ENCODE measurements at regions of chr12 and their contacts with region 1.

Region 1: GRCh38 chr12:122471324-122472226 is 29.2 kb downstream of the ZCCHC8 start:
- DNase-seq: no peak
- ATAC-seq: peak; percentile 56
- H3K4me3 Mint-ChIP-seq: no peak overlapping the region
- H3K27ac Mint-ChIP-seq: no peak overlapping the region
- H3K4me1 Mint-ChIP-seq: peaks cover 23% of the 10 kb centered on the region
- H3K27me3 Mint-ChIP-seq: no peaks in the 10 kb centered on the region

Region 2: GRCh38 chr12:122406701-122407164 is 64.8 kb before region 1 on chr12:
- CTCF ChIA-PET with region 1: interaction called, 253 read pairs
- POLR2A ChIA-PET with region 1: no interaction called
- DNase-seq: no peak
- ATAC-seq: no peak
- H3K4me3 Mint-ChIP-seq: no peak overlapping the region
- H3K27ac Mint-ChIP-seq: no peak overlapping the region
- H3K4me1 Mint-ChIP-seq: peaks cover 16% of the 10 kb centered on the region
- H3K27me3 Mint-ChIP-seq: no peaks in the 10 kb centered on the region

Region 3: GRCh38 chr12:122421821-122422729 is 49.5 kb before region 1 on chr12 and contains the start of gene CLIP1:
- CTCF ChIA-PET with region 1: interaction called, 31 read pairs
- POLR2A ChIA-PET with region 1: interaction called, 4 read pairs
- DNase-seq: peak; percentile 64
- ATAC-seq: peak; percentile 88
- H3K4me3 Mint-ChIP-seq: peak within 1 kb of the TSS; percentile 88
- H3K27ac Mint-ChIP-seq: peak within 1 kb of the TSS; percentile 89
- H3K4me1 Mint-ChIP-seq: peaks cover 30% of the 10 kb centered on the region
- H3K27me3 Mint-ChIP-seq: peaks cover 3% of the 10 kb centered on the region
- total RNA-seq, gene CLIP1: 61.4 to 63.2 TPM

Region 4: DNA sequence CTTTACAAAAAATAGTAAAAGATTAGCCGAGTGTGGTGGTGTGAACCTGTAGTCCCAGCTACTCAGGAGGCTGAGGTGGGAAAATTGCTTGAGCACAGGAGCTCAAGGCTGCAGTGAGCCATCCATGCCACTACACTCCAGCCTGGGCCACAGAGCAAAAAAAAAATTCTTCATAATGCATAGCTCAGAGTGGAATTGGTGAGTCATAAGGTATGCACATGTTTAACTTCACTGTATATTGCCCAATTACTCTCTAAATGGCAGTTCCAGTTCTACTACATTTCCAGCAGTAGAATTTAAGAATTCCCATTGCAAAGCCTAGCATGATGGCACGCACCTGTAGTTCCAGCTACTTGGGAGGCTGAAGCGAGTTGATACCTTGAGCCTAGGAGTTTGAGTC is 22.2 kb before region 1 on chr12:
- CTCF ChIA-PET with region 1: interaction called, 10 read pairs
- POLR2A ChIA-PET with region 1: interaction called, 3 read pairs
- DNase-seq: no peak
- ATAC-seq: no peak
- H3K4me3 Mint-ChIP-seq: no peak overlapping the region
- H3K27ac Mint-ChIP-seq: no peak overlapping the region
- H3K4me1 Mint-ChIP-seq: peaks cover 25% of the 10 kb centered on the region
- H3K27me3 Mint-ChIP-seq: peaks cover 2% of the 10 kb centered on the region

Region 5: DNA sequence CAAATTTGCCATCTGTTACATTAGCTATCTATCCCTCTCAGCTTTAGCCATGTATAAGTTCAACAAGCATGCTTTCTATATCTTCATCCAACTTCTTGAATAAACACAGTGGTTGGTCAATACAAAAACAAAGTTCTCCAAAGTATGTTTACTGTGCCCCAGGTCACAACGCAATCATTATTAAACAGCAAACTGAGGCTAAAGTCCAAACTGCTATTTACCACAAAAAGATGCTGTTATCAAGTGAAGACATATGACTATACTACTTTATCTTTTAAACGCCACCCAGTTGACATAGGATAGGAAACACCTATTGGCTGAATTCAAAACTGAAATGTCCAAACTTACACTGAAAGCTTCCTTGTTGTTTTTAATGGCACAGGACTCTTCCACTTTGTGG is 17.5 kb after region 1 on chr12:
- CTCF ChIA-PET with region 1: interaction called, 11 read pairs
- POLR2A ChIA-PET with region 1: interaction called, 3 read pairs
- DNase-seq: no peak
- ATAC-seq: no peak
- H3K4me3 Mint-ChIP-seq: no peak overlapping the region
- H3K27ac Mint-ChIP-seq: no peak overlapping the region
- H3K4me1 Mint-ChIP-seq: peaks cover 3% of the 10 kb centered on the region
- H3K27me3 Mint-ChIP-seq: no peaks in the 10 kb centered on the region

Region 6: GRCh38 chr12:122500685-122501488 is 29.3 kb after region 1 on chr12 and contains the start of gene ZCCHC8:
- CTCF ChIA-PET with region 1: interaction called, 15 read pairs
- POLR2A ChIA-PET with region 1: interaction called, 4 read pairs
- DNase-seq: peak; percentile 99
- ATAC-seq: peak; percentile 95
- H3K4me3 Mint-ChIP-seq: peak within 1 kb of the TSS; percentile 99
- H3K27ac Mint-ChIP-seq: peak within 1 kb of the TSS; percentile 99
- H3K4me1 Mint-ChIP-seq: peaks cover 34% of the 10 kb centered on the region
- H3K27me3 Mint-ChIP-seq: no peaks in the 10 kb centered on the region
- total RNA-seq, gene ZCCHC8: 41.3 to 45.3 TPM

Region 7: GRCh38 chr12:122517877-122518276 is 46.3 kb after region 1 on chr12:
- CTCF ChIA-PET with region 1: no interaction called
- POLR2A ChIA-PET with region 1: no interaction called
- DNase-seq: no peak
- ATAC-seq: no peak
- H3K4me3 Mint-ChIP-seq: no peak overlapping the region
- H3K27ac Mint-ChIP-seq: no peak overlapping the region
- H3K4me1 Mint-ChIP-seq: peaks cover 37% of the 10 kb centered on the region
- H3K27me3 Mint-ChIP-seq: no peaks in the 10 kb centered on the region

Region 8: GRCh38 chr12:122533856-122534255 is 62.3 kb after region 1 on chr12:
- CTCF ChIA-PET with region 1: no interaction called
- POLR2A ChIA-PET with region 1: no interaction called
- DNase-seq: no peak
- ATAC-seq: no peak
- H3K4me3 Mint-ChIP-seq: no peak overlapping the region
- H3K27ac Mint-ChIP-seq: no peak overlapping the region
- H3K4me1 Mint-ChIP-seq: peaks cover 18% of the 10 kb centered on the region
- H3K27me3 Mint-ChIP-seq: no peaks in the 10 kb centered on the region

Measured in activated CD8-positive, alpha-beta T cell treated with anti-CD3 and anti-CD28 coated beads, Interleukin-2, amount 10 ng/mL, durations not matched to agents 7 days and 5 days (primary cell).